PC-3 (cell line): ENCODE measurements at regions of chr3 and their contacts with region 1.

Region 1: GRCh38 chr3:191328962-191329653 is at the start of gene CCDC50:
- DNase-seq: peak; percentile 72
- ATAC-seq: peak; percentile 60
- H3K4me3 ChIP-seq: peak within 1 kb of the TSS; percentile 84
- H3K27ac ChIP-seq: peak within 1 kb of the TSS; percentile 72
- H3K4me1 ChIP-seq: peaks cover 39% of the 10 kb centered on the region
- H3K27me3 ChIP-seq: no peaks in the 10 kb centered on the region
- CTCF ChIP-seq: no peak
- total RNA-seq, gene CCDC50: 68.4 and 80.9 TPM in 2 replicates

Region 2: DNA sequence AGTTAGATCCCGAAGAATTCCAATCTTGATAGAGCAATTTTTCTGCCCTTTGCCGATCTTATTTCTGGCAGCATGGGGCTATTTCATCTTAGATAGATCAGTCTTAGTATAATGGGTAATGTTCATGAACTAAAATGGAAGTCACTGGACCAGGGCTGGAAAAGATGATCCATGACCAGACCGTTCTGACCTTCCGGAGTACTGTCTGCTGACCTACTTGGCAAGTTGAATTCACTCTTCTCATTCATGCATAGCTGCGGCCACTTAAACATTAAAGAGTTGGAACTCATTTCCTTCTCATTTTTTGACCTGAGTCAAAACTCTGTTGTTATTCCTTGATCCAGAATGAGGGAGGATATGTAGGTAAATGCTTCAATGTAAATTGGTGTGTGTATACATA is 499.1 kb before region 1 on chr3:
- CTCF ChIA-PET with region 1: no interaction called
- POLR2A ChIA-PET with region 1: no interaction called
- intact Hi-C with region 1: no loop called
- DNase-seq: no peak
- ATAC-seq: no peak
- H3K4me3 ChIP-seq: no peak overlapping the region
- H3K27ac ChIP-seq: no peak overlapping the region
- H3K4me1 ChIP-seq: no peaks in the 10 kb centered on the region
- H3K27me3 ChIP-seq: peaks cover 8% of the 10 kb centered on the region; the same call in 1 of the 2 replicates
- CTCF ChIP-seq: no peak

Region 3: GRCh38 chr3:191066669-191067068 is 262.4 kb before region 1 on chr3:
- CTCF ChIA-PET with region 1: no interaction called
- POLR2A ChIA-PET with region 1: no interaction called
- intact Hi-C with region 1: loop called (anchors 2 kb)
- DNase-seq: peak; percentile 92
- ATAC-seq: peak; percentile 67
- H3K4me3 ChIP-seq: peak overlapping the region; percentile 25; the same call in 1 of the 2 replicates
- H3K27ac ChIP-seq: peak overlapping the region; percentile 95
- H3K4me1 ChIP-seq: peaks cover 69% of the 10 kb centered on the region
- H3K27me3 ChIP-seq: no peaks in the 10 kb centered on the region
- CTCF ChIP-seq: no peak

Region 4: DNA sequence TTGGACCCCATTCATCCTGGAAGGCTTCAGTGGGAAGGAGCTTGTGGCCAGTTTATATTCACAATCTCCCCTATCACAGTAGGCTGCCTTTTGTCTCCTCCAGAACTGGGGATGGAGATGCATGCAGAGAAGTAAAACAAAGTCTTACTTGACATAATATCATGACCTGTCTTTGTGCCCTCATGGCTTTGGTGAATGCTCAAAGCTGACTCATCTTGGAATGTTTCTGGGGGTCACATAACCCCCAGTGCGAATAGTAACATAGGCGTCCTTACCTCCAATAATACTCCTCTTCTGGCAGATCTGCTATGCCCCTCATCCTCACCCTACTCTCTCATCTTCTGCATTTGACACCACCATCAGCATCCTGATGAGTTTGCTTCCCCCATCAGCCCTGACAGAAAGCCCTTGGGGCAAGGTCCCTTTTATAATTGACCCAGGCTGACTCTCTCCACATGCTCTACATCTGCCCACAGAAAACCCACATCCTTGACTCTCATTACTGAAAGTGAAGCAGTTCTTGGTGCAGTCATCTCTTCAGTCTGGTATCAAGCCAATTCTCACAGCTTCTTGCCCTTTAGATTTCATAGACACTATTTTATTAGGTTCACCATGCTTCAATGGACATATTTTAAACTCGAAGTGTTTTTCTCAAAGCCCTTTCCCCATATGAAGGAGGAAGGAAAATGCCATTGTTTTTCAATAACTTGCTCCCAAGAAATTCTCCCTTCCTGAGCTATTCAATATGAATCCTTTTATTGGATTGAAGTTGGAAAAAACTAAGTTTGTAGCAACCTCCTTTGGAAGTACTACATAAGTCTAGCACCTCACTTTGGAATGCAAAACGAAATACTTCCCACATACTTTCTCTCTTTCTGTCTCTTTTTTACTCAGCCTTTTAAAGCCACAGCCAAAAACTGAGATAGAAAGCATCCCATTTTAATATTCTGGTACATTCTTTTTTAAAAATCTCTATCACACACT is 93.5 kb before region 1 on chr3:
- CTCF ChIA-PET with region 1: no interaction called
- POLR2A ChIA-PET with region 1: interaction called, 5 read pairs
- intact Hi-C with region 1: loop called (anchors 2 kb)
- DNase-seq: peak; percentile 57
- ATAC-seq: no peak
- H3K4me3 ChIP-seq: no peak overlapping the region
- H3K27ac ChIP-seq: peak overlapping the region; percentile 94
- H3K4me1 ChIP-seq: peaks cover 57% of the 10 kb centered on the region
- H3K27me3 ChIP-seq: no peaks in the 10 kb centered on the region
- CTCF ChIP-seq: no peak

Region 5: DNA sequence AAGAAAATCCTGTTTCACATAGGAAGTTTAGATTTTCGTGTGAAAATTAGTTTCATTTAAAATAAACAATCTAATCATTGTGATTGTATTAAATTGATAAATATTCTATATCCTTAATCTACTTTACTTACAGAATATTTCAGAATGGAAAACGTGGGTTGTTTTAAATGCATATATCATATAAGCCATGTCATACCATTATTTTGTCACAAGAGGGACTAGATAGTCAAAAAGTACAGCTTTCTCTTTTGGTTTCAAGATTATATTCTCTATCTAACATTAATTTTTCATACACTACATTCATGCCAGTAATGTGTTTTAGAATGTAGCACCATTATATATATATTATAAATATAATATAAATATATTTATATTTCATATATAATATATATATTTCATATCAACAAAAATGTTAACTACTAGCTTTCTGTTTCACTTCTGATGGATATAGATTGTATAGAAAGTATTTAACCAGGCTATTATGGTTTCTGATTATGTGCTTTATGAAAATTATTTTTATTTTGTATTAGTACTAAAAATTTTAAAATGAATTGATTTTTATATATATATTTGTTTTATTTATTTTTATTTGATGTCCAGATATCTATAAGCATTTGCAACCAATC is 84.8 kb before region 1 on chr3:
- CTCF ChIA-PET with region 1: interaction called, 4 read pairs
- POLR2A ChIA-PET with region 1: interaction called, 5 read pairs
- intact Hi-C with region 1: loop called (anchors 1 kb)
- DNase-seq: peak; percentile 56
- ATAC-seq: peak; percentile 19; the same call in 1 of the 2 replicates
- H3K4me3 ChIP-seq: no peak overlapping the region
- H3K27ac ChIP-seq: no peak overlapping the region
- H3K4me1 ChIP-seq: peaks cover 44% of the 10 kb centered on the region
- H3K27me3 ChIP-seq: no peaks in the 10 kb centered on the region
- CTCF ChIP-seq: peak; percentile 65

Region 6: DNA sequence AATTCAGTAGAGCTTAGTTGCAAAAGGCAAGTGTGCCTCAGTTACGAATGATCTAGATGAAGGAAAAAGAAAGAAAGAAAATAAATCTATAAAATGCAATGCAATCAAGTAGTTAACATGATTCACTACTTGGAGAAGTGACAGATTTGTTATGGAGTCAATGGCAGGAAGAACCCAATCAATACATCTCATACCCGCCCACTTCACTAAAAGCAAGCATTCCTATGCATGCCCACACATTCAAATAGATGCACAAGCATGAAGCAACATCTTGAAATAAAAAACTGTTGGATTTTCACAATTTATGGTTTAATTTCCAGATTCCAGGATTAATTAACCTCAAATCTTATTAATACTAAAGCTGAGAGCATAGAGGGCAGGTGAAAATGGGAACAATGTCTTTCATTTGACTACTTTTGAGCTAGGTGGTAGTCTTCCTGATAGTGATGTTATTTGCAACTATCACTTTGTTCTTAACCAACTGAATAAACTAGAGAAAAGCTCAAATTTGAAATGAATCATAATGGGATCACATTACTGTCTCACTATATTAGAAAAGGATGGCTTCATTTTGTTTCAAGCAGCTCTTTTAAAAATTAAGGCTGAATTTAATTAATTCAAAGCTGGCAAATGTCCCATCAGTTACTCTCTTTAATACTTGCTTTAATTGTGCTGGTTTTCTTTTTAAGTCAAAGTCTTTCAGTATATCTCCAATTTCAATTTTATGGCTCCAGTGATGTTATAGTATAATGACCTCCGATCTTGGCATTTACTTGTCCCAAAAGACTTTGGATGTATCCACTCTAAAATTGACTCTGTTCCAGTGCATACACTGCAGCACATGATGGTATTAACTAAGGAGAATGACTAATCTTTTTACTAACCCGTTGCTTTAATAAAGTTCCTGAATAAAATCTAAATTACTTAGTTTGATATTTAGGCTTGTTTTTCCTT is 46.6 kb before region 1 on chr3:
- CTCF ChIA-PET with region 1: no interaction called
- POLR2A ChIA-PET with region 1: no interaction called
- intact Hi-C with region 1: loop called (anchors 2 kb)
- DNase-seq: peak; percentile 30
- ATAC-seq: peak; percentile 95
- H3K4me3 ChIP-seq: no peak overlapping the region
- H3K27ac ChIP-seq: no peak overlapping the region
- H3K4me1 ChIP-seq: peaks cover 14% of the 10 kb centered on the region
- H3K27me3 ChIP-seq: no peaks in the 10 kb centered on the region
- CTCF ChIP-seq: no peak

Region 7: GRCh38 chr3:191350396-191351090 is 21.4 kb after region 1 on chr3:
- CTCF ChIA-PET with region 1: no interaction called
- POLR2A ChIA-PET with region 1: no interaction called
- intact Hi-C with region 1: loop called (anchors 1 kb)
- DNase-seq: peak; percentile 86
- ATAC-seq: peak; percentile 45
- H3K4me3 ChIP-seq: peak overlapping the region; percentile 36; the same call in 1 of the 2 replicates
- H3K27ac ChIP-seq: peak overlapping the region; percentile 46
- H3K4me1 ChIP-seq: peaks cover 56% of the 10 kb centered on the region
- H3K27me3 ChIP-seq: no peaks in the 10 kb centered on the region
- CTCF ChIP-seq: no peak

Region 8: GRCh38 chr3:191376516-191377141 is 47.5 kb after region 1 on chr3:
- CTCF ChIA-PET with region 1: no interaction called
- POLR2A ChIA-PET with region 1: interaction called, 4 read pairs
- intact Hi-C with region 1: loop called (anchors 1 kb)
- DNase-seq: peak; percentile 91
- ATAC-seq: peak; percentile 93
- H3K4me3 ChIP-seq: peak overlapping the region; percentile 11; the same call in 1 of the 2 replicates
- H3K27ac ChIP-seq: peak overlapping the region; percentile 79
- H3K4me1 ChIP-seq: peaks cover 44% of the 10 kb centered on the region
- H3K27me3 ChIP-seq: no peaks in the 10 kb centered on the region
- CTCF ChIP-seq: no peak